CD4-positive, alpha-beta T cell (primary cell): ENCODE measurements at regions of chr2 and their contacts with region 1.

Region 1: DNA sequence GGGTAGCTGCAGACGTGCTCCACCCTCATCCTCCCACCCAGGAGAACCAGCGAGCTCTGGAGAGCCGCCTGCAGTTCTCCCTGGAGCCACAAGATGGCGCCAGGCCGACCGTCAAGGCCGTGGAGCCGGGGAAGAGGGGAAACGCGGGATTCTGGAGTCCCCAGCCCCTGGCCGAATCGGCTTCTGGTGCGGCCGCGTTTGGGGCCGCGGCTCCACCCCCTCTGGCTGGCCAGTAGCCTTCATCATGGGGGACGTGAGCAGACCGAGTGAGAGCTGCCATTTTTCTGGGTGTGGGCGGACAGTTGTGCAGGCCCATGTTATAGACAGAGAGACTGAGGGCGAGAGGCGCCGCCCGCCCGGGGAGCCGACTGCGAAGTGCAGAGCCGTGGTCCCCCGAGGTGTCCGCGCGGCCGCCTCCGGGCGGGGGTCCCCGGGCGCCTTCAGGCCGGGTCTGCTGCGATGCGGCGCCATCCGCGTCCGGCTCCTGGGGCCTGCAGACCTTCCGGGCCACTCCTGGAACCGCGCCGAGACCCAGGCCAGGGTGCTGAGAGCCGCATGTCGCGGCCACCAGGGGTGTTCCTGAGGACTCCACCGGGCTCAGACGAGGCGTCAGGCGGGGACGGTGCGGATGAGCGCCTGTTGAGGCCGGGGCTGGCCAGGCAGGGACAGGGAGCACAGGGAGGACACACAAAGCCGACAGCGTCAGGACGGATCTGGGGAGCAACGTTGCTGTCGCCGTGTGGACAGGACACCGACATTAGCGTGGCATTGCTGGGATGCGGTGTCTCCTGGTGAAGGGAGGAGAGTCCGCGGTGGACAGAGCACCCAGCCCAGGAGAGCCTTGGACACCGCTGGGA is 418.2 kb upstream of the HS6ST1 start:
- DNase-seq: peak; percentile 20 to 68 (median 30)
- ATAC-seq: peak; percentile 49
- H3K4me3 ChIP-seq: peak overlapping the region; percentile 10
- H3K4me3 Mint-ChIP-seq: peak overlapping the region; percentile 20
- H3K27ac ChIP-seq: no peak overlapping the region
- H3K27ac Mint-ChIP-seq: no peak overlapping the region
- H3K4me1 ChIP-seq: peaks cover 7% of the 10 kb centered on the region
- H3K4me1 Mint-ChIP-seq: peaks cover 10% of the 10 kb centered on the region
- H3K27me3 ChIP-seq: peaks cover 3 to 12% of the 10 kb centered on the region in 2 experiments
- H3K27me3 Mint-ChIP-seq: peaks cover 36% of the 10 kb centered on the region
- CTCF ChIP-seq: peak; percentile 89

Region 2: GRCh38 chr2:129849559-129850160 is 1112.7 kb after region 1 on chr2:
- CTCF ChIA-PET with region 1: no interaction called
- POLR2A ChIA-PET with region 1: no interaction called
- intact Hi-C with region 1: loop called (anchors 10 kb)
- DNase-seq: peak in 3 of 14 experiments; percentile 74 to 80 (median 79)
- ATAC-seq: peak; percentile 81
- H3K4me3 ChIP-seq: no peak overlapping the region
- H3K4me3 Mint-ChIP-seq: no peak overlapping the region
- H3K27ac ChIP-seq: no peak overlapping the region
- H3K27ac Mint-ChIP-seq: no peak overlapping the region
- H3K4me1 ChIP-seq: no peaks in the 10 kb centered on the region
- H3K4me1 Mint-ChIP-seq: peaks cover 5% of the 10 kb centered on the region
- H3K27me3 ChIP-seq: peaks cover 4 to 6% of the 10 kb centered on the region in 2 experiments
- H3K27me3 Mint-ChIP-seq: peaks cover 32% of the 10 kb centered on the region
- CTCF ChIP-seq: peak; percentile 75

Region 3: GRCh38 chr2:129923265-129924091 is 1186.6 kb after region 1 on chr2:
- CTCF ChIA-PET with region 1: no interaction called
- POLR2A ChIA-PET with region 1: no interaction called
- intact Hi-C with region 1: loop called (anchors 5 to 10 kb)
- DNase-seq: peak in 2 of 14 experiments; percentile 4 to 24
- ATAC-seq: no peak
- H3K4me3 ChIP-seq: no peak overlapping the region
- H3K4me3 Mint-ChIP-seq: no peak overlapping the region
- H3K27ac ChIP-seq: no peak overlapping the region
- H3K27ac Mint-ChIP-seq: no peak overlapping the region
- H3K4me1 ChIP-seq: peaks cover 4% of the 10 kb centered on the region
- H3K4me1 Mint-ChIP-seq: peaks cover 5% of the 10 kb centered on the region
- H3K27me3 ChIP-seq: peaks cover 17 to 21% of the 10 kb centered on the region in 2 experiments
- H3K27me3 Mint-ChIP-seq: peaks cover 54% of the 10 kb centered on the region
- CTCF ChIP-seq: no peak

Region 4: GRCh38 chr2:130332271-130333073 is 1595.6 kb after region 1 on chr2:
- CTCF ChIA-PET with region 1: no interaction called
- POLR2A ChIA-PET with region 1: no interaction called
- intact Hi-C with region 1: loop called in 1 of 2 experiments (anchors 5 kb)
- DNase-seq: peak; percentile 45 to 80 (median 62)
- ATAC-seq: peak; percentile 76
- H3K4me3 ChIP-seq: no peak overlapping the region
- H3K4me3 Mint-ChIP-seq: peak overlapping the region; percentile 40
- H3K27ac ChIP-seq: no peak overlapping the region
- H3K27ac Mint-ChIP-seq: no peak overlapping the region
- H3K4me1 ChIP-seq: peaks cover 9% of the 10 kb centered on the region
- H3K4me1 Mint-ChIP-seq: peaks cover 14% of the 10 kb centered on the region
- H3K27me3 ChIP-seq: peaks cover 2 to 7% of the 10 kb centered on the region in 2 experiments
- H3K27me3 Mint-ChIP-seq: peaks cover 36% of the 10 kb centered on the region
- CTCF ChIP-seq: peak; percentile 94